Right ventricle myocardium superior (tissue), 1 donor: ENCODE measurements at regions of chr6 and their contacts with region 1.

Region 1: DNA sequence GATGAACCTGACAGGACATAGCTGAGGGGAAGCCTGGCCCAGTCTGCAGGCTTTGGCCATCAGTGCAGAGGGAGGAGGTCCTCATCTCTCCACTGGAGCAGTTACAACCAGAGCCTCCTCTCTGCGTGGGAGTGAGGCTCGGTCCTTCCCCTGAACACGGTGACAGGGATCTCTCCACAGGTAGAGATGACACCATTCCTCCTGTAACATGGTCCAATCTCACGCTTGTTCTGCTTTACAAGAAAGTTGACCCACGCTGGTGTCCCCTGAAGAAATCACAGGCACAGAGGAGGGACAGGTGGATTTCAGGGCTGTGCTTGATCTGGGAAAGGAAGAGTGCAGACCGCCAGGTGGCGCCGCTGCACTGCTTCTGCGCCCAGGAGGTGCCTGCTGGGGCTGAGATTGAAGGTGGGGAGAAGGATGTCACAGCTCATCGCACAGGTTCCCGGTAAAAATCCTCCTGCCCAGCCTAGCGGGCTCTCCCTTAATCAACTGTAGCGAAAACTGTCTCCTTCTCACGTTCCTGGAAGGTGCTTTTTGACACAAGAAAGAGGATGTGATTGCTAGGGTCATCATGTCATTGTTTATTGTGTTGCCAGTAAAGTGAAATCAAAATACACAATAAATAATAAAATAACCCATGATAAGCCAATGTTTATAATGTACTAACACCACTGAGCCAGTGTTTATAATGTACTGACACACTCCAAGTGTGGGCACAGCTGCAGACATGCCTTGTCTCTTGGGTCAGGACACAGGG is 20.4 kb downstream of the HLA-G start:
- DNase-seq: peak; percentile 90
- ATAC-seq: peak; percentile 96

Region 2: DNA sequence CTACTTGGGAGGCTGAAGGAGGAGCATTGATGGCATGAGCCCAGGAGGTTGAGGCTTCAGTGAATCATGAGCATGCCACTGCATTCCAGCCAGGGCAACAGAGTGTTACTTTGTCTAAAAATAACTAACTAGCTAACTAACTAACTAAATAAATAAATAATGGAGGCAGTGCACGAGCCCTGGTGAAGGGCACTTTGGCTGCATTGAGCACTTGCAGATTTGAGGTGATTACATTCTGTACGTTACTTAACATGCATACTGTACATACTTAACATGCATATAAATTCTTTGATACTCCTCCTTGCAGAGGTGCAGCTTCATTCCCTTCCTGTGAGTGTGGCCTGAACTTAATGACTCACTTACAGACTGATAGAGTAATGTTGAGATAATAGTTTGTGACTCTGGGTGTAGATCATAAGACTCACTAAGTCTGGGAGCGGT is 105.0 kb after region 1 on chr6:
- intact Hi-C with region 1: no loop called
- DNase-seq: no peak
- ATAC-seq: peak; percentile 76

Region 3: DNA sequence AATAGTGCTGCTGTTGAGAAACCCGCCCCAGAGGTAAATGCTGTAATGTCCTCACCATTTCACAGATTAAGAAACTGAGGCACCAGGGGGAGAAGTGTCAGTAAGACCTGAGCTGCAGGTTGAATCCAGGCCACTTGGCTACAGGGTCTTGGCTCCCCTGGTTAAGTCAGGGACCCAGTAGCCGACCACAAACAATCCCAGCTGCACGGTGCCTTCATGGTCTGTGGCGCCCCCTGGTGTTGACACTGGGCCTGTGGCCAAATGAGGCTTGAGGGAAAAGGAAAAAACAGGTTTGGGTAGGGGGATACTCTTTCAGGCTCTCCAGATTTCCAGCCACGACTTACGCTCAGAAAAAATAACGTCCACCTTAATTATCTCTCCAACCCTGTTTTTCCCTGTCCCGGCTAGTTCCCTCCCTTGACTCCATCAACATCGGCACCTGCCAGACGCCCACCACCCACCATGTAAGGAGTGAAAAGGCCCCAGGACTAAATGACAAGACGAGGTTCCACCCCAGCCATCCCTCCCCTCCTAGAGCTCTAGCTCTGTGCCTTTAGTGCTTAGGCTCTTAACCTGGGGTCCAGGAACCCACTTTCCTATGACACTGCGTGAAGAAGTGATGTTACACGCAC is 165.4 kb after region 1 on chr6:
- intact Hi-C with region 1: loop called (anchors 2 kb)
- DNase-seq: no peak
- ATAC-seq: peak; percentile 65

Region 4: DNA sequence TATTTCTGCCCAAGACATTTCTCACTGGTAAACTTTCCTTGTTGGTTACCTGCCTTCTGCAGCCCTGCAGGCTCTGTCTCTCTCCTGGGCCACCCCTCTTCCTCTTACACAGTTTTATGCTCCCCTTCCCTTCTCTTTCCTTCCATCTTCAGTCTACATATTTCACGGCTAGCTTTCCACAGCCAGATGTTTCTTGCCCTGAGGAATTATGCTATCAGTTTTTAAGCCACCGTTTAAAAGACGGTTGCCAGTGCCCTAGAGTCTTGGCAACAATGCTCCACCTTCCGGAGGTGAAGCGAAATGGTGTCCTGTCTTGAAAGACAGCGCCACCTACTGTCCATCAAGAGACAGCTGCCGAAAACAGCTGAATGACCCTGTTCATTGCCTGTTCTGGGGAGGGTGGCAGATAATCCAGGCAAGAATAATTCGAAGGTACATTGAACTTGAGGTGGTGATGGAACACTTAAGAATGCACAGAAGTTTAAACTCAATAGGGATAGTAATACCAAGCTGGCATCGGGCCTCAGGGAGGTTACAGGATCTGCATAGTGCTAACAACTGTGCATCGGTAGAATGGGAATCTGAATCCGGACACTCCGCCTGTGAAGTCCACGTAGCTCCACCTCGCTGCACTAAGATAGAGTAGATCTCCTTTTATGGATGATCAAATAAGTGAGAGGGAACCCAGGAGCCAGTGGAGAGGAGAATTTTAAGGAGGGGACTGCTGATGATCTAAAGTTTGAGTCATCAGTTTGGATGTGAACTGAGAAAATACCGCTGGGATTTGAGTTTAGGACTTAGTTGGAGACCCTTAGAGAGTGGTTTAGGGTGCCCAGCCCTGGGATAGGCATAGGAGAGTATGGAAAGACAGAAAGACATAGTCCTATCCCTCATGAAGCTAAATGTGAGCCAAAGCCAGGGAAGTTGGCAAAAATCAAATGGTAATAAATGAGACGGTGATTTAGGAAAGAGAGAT is 283.1 kb after region 1 on chr6:
- intact Hi-C with region 1: loop called (anchors 10 kb)
- DNase-seq: peak; percentile 41
- ATAC-seq: peak; percentile 94